Activated CD4-positive, alpha-beta memory T cell treated with anti-CD3 and anti-CD28 coated beads, Interleukin-2, amount 10 ng/mL, durations not matched to agents 7 days and 5 days (primary cell): ENCODE measurements at regions of chr1 and their contacts with region 1.

Region 1: DNA sequence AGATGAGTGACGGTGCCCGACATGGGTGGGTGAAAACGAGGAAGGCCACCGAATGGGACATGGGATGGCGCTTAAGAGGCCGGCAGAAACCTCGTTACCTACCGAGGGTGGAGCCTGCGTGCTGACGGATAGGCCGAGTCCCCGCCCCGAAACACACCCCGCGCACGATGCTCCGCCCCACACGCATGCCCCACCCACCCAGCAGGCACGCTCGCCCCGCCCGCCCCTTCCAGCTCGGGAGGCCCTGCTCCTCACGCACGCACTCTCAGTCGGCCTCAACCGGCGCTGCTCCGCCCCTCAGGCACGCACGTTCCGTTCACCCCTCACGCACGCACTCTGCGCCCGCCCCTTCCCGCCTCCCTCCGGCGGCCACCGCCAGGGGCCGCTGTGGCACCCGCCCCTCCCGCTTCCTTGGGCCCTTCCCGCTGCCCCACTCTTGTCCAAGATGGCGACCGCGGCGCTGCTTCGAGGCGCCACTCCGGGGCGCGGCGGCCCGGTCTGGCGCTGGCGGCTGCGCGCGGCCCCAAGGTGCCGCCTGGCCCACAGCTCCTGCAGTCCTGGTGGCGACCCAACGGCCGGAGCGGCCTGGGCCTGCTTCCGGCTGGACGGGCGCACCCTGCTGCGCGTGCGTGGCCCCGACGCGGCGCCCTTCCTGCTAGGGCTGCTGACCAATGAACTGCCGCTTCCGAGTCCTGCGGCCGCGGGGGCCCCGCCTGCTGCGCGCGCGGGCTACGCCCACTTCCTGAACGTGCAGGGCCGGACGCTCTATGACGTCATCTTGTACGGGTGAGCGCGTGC is at the start of gene IBA57:
- DNase-seq: peak; percentile 100
- H3K4me3 Mint-ChIP-seq: peak within 1 kb of the TSS; percentile 86
- H3K27ac Mint-ChIP-seq: peak within 1 kb of the TSS; percentile 89
- H3K4me1 Mint-ChIP-seq: peaks cover 34% of the 10 kb centered on the region
- H3K27me3 Mint-ChIP-seq: no peaks in the 10 kb centered on the region
- total RNA-seq, gene IBA57: 4.5 to 5.2 TPM

Region 2: DNA sequence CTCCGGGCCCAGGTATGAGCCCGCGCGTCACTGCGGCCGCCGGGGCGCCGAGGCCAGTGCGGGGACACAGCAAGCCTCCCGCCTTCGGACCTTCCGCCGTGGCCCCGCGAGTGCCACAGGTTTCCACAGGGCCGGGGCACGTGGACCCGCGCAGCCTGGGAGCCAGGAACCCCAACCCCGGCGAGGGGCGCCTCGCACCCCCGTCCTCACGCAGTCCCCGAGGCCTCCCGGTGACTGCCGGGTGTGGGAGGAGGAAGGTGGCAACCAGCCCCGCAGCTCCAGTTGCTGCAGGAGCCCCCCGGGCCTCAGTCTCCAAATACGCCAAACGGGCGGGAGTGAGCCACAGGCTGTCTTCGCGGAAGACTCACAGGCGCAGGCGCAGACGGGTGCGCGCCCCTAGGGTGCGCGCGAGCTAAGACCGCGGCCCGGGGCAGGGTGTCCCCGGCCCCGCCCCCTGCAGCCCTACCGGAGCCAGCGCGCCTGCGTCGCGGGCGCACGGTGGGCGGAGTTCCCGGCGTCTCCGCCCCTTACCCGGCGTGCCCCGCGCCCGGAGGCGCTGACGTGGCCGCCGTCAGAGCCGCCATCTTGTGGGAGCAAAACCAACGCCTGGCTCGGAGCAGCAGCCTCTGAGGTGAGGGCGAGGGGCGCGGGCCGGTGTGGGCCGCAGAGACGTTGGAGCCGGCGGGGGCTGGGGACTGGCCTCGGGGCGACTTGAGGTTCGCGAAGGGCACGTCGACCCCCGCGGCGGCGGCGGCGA is 83.3 kb before region 1 on chr1 and contains the start of gene ARF1:
- CTCF ChIA-PET with region 1: interaction called, 13 read pairs
- POLR2A ChIA-PET with region 1: interaction called, 27 read pairs
- DNase-seq: peak; percentile 94
- H3K4me3 Mint-ChIP-seq: peak within 1 kb of the TSS; percentile 90
- H3K27ac Mint-ChIP-seq: peak within 1 kb of the TSS; percentile 87
- H3K4me1 Mint-ChIP-seq: peaks cover 50% of the 10 kb centered on the region
- H3K27me3 Mint-ChIP-seq: no peaks in the 10 kb centered on the region
- total RNA-seq, gene ARF1: 368 to 376 TPM

Region 3: GRCh38 chr1:228131766-228132165 is 33.8 kb before region 1 on chr1:
- CTCF ChIA-PET with region 1: interaction called, 50 read pairs
- POLR2A ChIA-PET with region 1: interaction called, 95 read pairs
- DNase-seq: no peak
- H3K4me3 Mint-ChIP-seq: no peak overlapping the region
- H3K27ac Mint-ChIP-seq: no peak overlapping the region
- H3K4me1 Mint-ChIP-seq: peaks cover 4% of the 10 kb centered on the region
- H3K27me3 Mint-ChIP-seq: peaks cover 21% of the 10 kb centered on the region

Region 4: GRCh38 chr1:228154670-228155571 is 10.7 kb before region 1 on chr1:
- CTCF ChIA-PET with region 1: interaction called, 16 read pairs
- POLR2A ChIA-PET with region 1: interaction called, 11 read pairs
- DNase-seq: no peak
- H3K4me3 Mint-ChIP-seq: no peak overlapping the region
- H3K27ac Mint-ChIP-seq: no peak overlapping the region
- H3K4me1 Mint-ChIP-seq: no peaks in the 10 kb centered on the region
- H3K27me3 Mint-ChIP-seq: no peaks in the 10 kb centered on the region

Region 5: DNA sequence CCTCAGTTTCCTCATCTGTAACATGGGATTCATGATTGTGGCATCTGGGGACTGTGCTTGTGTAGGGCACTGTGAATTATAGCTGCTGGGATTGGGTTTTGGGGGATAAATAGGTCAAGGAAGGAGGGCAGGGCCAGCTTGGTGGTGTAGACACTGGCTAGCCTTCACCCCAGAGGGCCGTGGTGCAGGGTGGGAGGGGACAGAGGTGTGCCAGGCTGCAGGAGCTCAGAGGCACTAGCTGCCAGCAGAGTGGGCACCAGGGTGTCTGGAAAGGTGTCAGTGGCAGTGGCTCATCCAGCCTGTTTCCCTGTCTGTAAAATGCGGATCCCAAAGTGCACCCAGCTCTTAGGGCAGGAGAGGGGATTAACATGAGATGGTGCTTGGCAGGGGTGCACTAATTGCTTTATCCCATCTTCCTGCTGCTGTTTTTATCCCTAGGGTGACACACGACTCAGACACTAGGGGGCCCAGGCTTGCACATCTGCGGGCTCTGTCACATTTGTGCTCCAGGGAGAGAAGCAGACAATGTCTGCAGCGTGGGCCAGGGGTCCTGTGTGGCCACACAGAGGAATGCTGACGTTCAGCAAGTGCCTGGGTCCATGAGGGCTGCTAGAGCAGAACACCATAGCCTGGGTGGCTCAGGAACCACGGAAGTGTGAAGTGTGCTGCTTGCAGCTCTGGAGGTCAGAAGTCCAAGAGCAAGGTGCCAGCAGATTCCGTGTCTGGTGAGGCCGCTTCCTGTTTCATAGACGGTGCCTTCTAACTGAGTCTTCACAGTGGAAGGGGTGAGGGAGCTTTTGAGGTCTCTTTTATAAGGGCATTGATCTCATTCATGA is 61.6 kb after region 1 on chr1:
- CTCF ChIA-PET with region 1: no interaction called
- POLR2A ChIA-PET with region 1: no interaction called
- DNase-seq: no peak
- H3K4me3 Mint-ChIP-seq: no peak overlapping the region
- H3K27ac Mint-ChIP-seq: peak overlapping the region; percentile 31
- H3K4me1 Mint-ChIP-seq: no peaks in the 10 kb centered on the region
- H3K27me3 Mint-ChIP-seq: no peaks in the 10 kb centered on the region

Region 6: GRCh38 chr1:228457396-228458176 is 292.0 kb after region 1 on chr1:
- CTCF ChIA-PET with region 1: interaction called, 7 read pairs
- POLR2A ChIA-PET with region 1: interaction called, 14 read pairs
- DNase-seq: peak; percentile 92
- H3K4me3 Mint-ChIP-seq: peak overlapping the region; percentile 96
- H3K27ac Mint-ChIP-seq: peak overlapping the region; percentile 99
- H3K4me1 Mint-ChIP-seq: peaks cover 55% of the 10 kb centered on the region
- H3K27me3 Mint-ChIP-seq: no peaks in the 10 kb centered on the region

Region 7: GRCh38 chr1:228486596-228487335 is 321.2 kb after region 1 on chr1:
- CTCF ChIA-PET with region 1: interaction called, 3 read pairs
- POLR2A ChIA-PET with region 1: interaction called, 10 read pairs
- DNase-seq: peak; percentile 82
- H3K4me3 Mint-ChIP-seq: peak overlapping the region; percentile 94
- H3K27ac Mint-ChIP-seq: peak overlapping the region; percentile 96
- H3K4me1 Mint-ChIP-seq: peaks cover 56% of the 10 kb centered on the region
- H3K27me3 Mint-ChIP-seq: no peaks in the 10 kb centered on the region

Region 8: GRCh38 chr1:228721402-228721801 is 555.8 kb after region 1 on chr1:
- CTCF ChIA-PET with region 1: no interaction called
- POLR2A ChIA-PET with region 1: no interaction called
- DNase-seq: no peak
- H3K4me3 Mint-ChIP-seq: no peak overlapping the region
- H3K27ac Mint-ChIP-seq: no peak overlapping the region
- H3K4me1 Mint-ChIP-seq: no peaks in the 10 kb centered on the region
- H3K27me3 Mint-ChIP-seq: peaks cover 10% of the 10 kb centered on the region